Ascending aorta (tissue), 2 donors: ENCODE measurements at regions of chrX and their contacts with region 1.

Region 1: DNA sequence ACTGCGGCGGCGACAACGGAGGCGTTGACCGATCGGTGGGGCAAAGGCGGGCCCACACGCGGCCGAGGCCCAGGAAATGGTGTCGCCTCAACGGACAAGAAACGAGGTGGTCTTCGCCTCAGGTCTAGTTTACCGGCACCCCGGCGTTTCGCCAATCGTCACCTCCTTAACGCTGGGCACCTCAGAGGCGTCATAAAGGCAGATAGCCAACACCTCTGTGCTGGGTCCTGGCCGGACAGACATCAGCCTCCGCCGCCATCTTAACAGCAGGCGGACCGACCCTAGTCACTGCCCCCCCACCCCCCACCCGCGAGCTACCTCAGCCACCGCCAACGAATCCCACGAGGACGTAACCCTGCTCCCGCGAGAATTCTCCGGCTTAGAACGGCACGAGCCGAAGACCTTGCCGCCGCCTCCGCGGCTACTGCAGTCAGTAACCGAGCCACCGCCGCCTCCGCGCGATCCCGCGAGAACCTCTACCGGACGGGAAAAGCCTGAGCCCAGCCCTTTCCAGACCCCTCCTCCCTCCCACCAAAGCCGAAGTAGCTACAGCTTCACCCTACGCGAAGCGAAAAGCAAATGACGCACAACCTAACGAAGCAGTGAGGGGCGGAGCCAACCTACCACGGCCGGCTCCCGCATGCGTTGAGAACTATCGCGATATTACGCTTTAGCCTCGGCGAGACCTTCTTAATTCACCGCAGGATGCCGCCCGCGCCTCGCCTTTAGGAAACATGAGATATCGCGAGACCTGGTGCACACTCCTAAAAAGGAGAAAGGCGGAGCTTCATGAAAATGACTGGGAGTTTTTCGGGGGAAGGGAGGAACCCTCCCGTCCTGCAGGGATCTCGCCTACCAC is 2.7 kb downstream of the HUWE1 start:
- DNase-seq: peak; percentile 84 to 96
- H3K4me3 ChIP-seq: peak overlapping the region; percentile 56 to 71
- H3K27ac ChIP-seq: peak overlapping the region; percentile 86 to 89
- H3K4me1 ChIP-seq: no peaks in the 10 kb centered on the region
- H3K27me3 ChIP-seq: no peaks in the 10 kb centered on the region
- CTCF ChIP-seq: no peak

Region 2: GRCh38 chrX:53422086-53422860 is 261.5 kb before region 1 on chrX and contains the start of gene SMC1A:
- intact Hi-C with region 1: loop called (anchors 5 kb)
- DNase-seq: peak; percentile 93 to 99
- H3K4me3 ChIP-seq: peak within 1 kb of the TSS; percentile 73 to 85
- H3K27ac ChIP-seq: peak within 1 kb of the TSS; percentile 91 to 92
- H3K4me1 ChIP-seq: peaks cover 5 to 10% of the 10 kb centered on the region in 2 donors
- H3K27me3 ChIP-seq: no peaks in the 10 kb centered on the region
- CTCF ChIP-seq: no peak
- total RNA-seq, gene SMC1A: 11.2 TPM

Region 3: GRCh38 chrX:53616946-53617345 is 66.8 kb before region 1 on chrX:
- intact Hi-C with region 1: no loop called
- DNase-seq: no peak
- H3K4me3 ChIP-seq: no peak overlapping the region
- H3K27ac ChIP-seq: no peak overlapping the region
- H3K4me1 ChIP-seq: no peaks in the 10 kb centered on the region
- H3K27me3 ChIP-seq: no peaks in the 10 kb centered on the region
- CTCF ChIP-seq: no peak

Region 4: GRCh38 chrX:53746718-53747117 is 62.9 kb after region 1 on chrX:
- intact Hi-C with region 1: loop called (anchors 5 kb)
- DNase-seq: no peak
- H3K4me3 ChIP-seq: no peak overlapping the region
- H3K27ac ChIP-seq: no peak overlapping the region
- H3K4me1 ChIP-seq: no peaks in the 10 kb centered on the region
- H3K27me3 ChIP-seq: no peaks in the 10 kb centered on the region
- CTCF ChIP-seq: no peak

Region 5: DNA sequence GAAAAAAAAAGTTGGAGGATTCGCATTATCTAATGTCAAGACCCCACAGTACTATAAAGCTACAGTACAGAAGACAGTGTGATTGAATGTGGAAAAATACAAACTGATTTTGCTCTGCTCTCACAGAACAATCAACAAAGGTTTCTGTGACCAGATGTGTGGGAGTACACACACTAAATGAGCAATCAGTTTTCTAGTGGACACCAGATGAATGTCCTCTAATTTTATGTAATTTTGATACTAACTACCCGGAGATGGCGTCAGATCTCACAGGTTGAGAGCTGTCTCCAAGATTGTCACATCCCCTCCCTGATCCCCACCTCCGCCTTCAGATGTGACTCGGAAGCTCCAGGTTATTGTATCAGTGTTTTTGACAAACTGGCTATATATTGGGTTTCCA is 84.7 kb after region 1 on chrX:
- intact Hi-C with region 1: no loop called
- DNase-seq: no peak
- H3K4me3 ChIP-seq: no peak overlapping the region
- H3K27ac ChIP-seq: no peak overlapping the region
- H3K4me1 ChIP-seq: no peaks in the 10 kb centered on the region
- H3K27me3 ChIP-seq: no peaks in the 10 kb centered on the region
- CTCF ChIP-seq: no peak

Region 6: GRCh38 chrX:54182864-54183608 is 499.3 kb after region 1 on chrX and contains the start of gene FAM120C:
- intact Hi-C with region 1: loop called (anchors 10 kb)
- DNase-seq: peak in 1 of 2 donors; percentile 73
- H3K4me3 ChIP-seq: peak within 1 kb of the TSS; percentile 69 to 78
- H3K27ac ChIP-seq: peak within 1 kb of the TSS; percentile 86 to 91
- H3K4me1 ChIP-seq: peaks cover 0 to 3% of the 10 kb centered on the region in 2 donors
- H3K27me3 ChIP-seq: no peaks in the 10 kb centered on the region
- CTCF ChIP-seq: no peak
- total RNA-seq, gene FAM120C: 1.6 TPM

Region 7: GRCh38 chrX:54999717-55000598 is 1316.2 kb after region 1 on chrX and contains the start of gene APEX2:
- intact Hi-C with region 1: loop called (anchors 10 kb)
- DNase-seq: peak; percentile 82 to 95
- H3K4me3 ChIP-seq: peak within 1 kb of the TSS; percentile 64 to 68
- H3K27ac ChIP-seq: peak within 1 kb of the TSS; percentile 86 to 87
- H3K4me1 ChIP-seq: peaks cover 0 to 3% of the 10 kb centered on the region in 2 donors
- H3K27me3 ChIP-seq: no peaks in the 10 kb centered on the region
- CTCF ChIP-seq: no peak
- total RNA-seq, gene APEX2: 31.5 TPM